ENCODE measurements at regions of chr17 and their contacts with region 1.

Region 1: DNA sequence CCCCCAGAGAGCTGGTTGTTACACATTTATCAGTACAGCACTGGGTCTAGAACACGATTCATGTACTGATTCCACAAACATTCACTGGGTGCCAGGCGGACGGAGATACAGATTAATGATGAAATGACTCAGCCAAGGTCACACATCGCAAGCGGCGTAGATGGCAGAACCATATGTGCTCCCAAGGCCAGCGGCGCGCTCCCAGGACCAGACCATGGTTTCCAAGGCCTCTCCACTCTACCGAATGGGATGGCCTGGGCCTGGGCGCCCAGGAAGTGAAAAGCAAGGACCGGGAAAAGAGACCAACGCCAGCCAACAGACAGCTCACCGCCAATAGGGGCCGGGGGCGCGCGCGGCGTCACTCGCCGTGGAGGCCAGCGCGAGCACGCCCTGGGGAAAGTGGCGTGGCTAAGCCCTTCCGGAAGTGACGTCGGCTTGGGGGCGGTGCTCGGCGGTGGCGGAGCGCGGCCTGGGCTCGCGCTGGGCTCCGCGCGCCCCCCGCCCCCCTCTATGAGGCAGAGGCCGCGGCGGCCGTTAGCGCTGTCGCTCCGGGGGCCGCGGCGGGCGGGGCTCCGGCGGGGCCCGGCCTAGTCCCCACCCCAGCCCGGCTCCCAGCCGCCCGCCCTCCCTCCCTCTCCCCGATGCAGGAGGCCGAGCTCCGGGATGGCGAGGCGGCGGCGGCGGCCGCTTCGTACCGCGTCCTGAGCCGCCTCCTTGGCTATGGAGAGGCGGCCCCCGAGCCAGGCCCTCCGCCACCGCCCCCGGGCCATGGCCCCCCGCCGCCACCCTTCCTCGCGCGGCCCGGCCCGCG is at the start of gene SOCS7:
- DNase-seq: peak; percentile 55
- H3K4me3 ChIP-seq: peak within 1 kb of the TSS; percentile 71
- H3K27ac ChIP-seq: peak within 1 kb of the TSS; percentile 89
- H3K27me3 ChIP-seq: no peaks in the 10 kb centered on the region
- CTCF ChIP-seq: no peak
- polyA plus RNA-seq, gene SOCS7: 5.8 and 6.5 TPM in 2 replicates

Region 2: DNA sequence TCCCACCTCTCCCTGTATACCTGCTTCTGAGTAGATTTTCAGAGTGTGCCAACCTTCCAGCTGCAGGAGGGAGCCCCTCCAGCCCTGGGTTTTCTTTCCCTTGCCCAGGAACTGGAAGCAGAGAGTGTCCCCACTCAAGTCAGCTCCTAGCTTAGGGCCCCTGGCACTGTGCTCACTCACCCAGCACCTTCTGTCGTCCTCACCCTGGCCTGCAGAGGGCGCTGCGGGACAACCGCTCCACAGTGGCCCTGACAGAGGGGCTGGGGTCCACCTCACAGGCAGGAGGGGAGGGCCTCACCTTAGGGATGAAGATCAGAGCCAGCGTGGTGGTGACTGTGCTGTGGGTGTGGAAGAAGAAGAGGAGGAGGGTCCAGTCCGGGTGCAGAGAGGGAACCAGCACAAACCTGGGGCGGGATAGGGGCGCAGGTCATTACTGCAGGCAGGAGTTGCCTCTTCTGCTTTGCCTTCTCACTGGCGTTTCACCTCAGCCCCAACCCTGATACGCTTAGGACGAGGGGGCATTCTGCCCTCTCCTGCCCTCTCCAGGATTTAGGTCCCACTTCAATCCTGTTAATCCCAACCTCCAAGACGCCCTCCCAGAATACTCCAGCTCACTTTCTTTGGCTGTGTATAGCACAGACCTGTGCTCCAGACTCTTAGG is 17.9 kb before region 1 on chr17:
- CTCF ChIA-PET with region 1: interaction called, 24 read pairs
- POLR2A ChIA-PET with region 1: no interaction called
- DNase-seq: no peak
- H3K4me3 ChIP-seq: no peak overlapping the region
- H3K27ac ChIP-seq: no peak overlapping the region
- H3K27me3 ChIP-seq: peaks cover 48% of the 10 kb centered on the region
- CTCF ChIP-seq: peak; percentile 60

Region 3: DNA sequence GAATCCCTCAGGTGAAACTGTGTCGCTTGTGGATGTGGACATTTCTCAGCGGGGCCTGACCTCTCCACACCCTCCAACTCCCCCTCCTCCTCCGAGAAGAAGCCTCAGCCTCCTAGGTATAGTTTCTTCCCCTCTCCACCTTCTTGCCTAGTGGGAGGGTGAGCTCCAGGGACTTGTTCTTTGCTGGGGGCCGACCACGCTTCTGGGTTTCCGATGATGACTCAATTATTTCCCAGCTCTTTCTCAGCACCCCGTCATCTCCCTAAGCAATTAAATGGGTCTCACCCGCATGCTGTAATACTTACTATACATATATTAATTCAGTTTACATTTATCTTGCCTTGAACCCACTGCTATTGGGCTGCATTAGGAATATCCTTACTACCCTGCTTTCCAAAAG is 13.1 kb after region 1 on chr17:
- CTCF ChIA-PET with region 1: interaction called, 40 read pairs
- POLR2A ChIA-PET with region 1: no interaction called
- DNase-seq: no peak
- H3K4me3 ChIP-seq: no peak overlapping the region
- H3K27ac ChIP-seq: no peak overlapping the region
- H3K27me3 ChIP-seq: no peaks in the 10 kb centered on the region
- CTCF ChIP-seq: no peak

Region 4: GRCh38 chr17:38403491-38403890 is 51.9 kb after region 1 on chr17:
- CTCF ChIA-PET with region 1: interaction called, 21 read pairs
- POLR2A ChIA-PET with region 1: no interaction called
- DNase-seq: no peak
- H3K4me3 ChIP-seq: no peak overlapping the region
- H3K27ac ChIP-seq: no peak overlapping the region
- H3K27me3 ChIP-seq: no peaks in the 10 kb centered on the region
- CTCF ChIP-seq: no peak

Region 5: GRCh38 chr17:38421171-38421841 is 69.7 kb after region 1 on chr17:
- CTCF ChIA-PET with region 1: interaction called, 179 read pairs
- POLR2A ChIA-PET with region 1: interaction called, 10 read pairs
- DNase-seq: peak; percentile 44
- H3K4me3 ChIP-seq: 0 out of 2 replicates have a peak overlapping the region, but pooled peaks have one; percentile 2
- H3K27ac ChIP-seq: peak overlapping the region; percentile 22
- H3K27me3 ChIP-seq: peaks cover 28% of the 10 kb centered on the region
- CTCF ChIP-seq: no peak

Region 6: DNA sequence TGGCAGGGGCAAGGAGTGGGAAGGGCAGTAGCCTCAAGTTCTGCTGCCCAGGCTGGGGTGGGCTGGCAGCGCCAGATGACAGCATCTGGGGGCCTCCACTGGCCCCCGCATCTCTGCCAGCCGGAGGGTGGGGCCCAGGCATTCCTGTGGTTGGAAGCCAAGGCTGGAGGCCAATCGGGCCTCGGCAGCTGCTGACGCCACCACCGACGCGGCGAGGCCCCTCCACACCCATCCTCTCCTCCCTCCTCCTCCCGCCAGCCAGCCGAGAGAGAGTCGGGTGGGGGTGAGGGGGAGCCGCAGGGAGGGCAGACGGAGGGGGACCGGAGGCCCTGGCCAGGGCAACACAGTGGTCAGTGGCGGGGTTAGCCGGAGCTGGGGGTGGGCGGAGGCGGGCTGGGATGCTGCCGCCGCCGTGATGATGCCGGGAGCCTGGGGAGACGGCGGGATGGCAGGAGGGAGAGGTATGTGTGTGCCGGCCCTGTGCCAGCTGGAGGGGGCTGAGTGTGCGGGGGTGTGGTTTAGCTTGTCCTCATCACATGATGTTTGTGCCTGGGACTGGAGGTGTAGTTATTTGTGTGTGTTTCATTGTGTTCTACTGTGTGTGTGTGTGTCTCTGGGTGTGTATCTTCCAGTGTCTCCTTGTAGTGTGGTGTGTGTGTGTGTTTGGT is 113.2 kb after region 1 on chr17:
- CTCF ChIA-PET with region 1: no interaction called
- POLR2A ChIA-PET with region 1: no interaction called
- DNase-seq: peak; percentile 83
- H3K4me3 ChIP-seq: peak overlapping the region; percentile 68
- H3K27ac ChIP-seq: peak overlapping the region; percentile 96
- H3K27me3 ChIP-seq: no peaks in the 10 kb centered on the region
- CTCF ChIP-seq: no peak

Region 7: DNA sequence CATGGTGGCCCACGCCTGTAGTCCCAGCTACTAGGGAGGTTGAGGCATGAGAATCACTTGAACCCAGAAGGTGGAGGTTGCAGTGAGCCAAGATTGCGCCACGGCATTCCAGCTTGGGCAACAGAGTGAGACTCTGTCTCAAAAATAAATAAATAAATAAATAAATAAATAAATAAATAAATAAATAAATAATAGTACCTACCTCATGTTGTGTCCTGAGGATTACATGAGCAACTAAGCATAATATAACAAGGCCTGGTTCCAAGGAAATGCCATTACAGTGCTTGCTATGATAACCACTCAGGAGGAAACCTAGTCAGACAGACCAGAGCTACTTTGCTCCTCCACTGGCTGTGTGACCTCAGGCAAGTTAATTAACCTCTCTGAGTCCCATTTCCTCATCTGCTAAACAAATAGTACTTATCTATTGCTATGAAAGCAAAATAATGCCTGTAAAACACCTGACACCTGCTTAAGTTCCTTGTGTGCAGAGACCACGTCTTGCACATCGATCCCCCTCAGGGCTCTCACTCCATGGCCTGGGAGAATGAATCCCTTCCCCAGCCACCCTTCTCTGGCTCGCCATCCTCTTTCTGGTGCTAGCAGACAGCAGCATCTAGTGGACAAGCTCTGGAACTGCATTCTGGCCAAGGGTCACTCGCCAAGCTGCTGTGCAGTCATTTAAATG is 315.6 kb after region 1 on chr17:
- CTCF ChIA-PET with region 1: interaction called, 15 read pairs
- POLR2A ChIA-PET with region 1: no interaction called
- DNase-seq: peak; percentile 42
- H3K4me3 ChIP-seq: no peak overlapping the region
- H3K27ac ChIP-seq: no peak overlapping the region
- H3K27me3 ChIP-seq: peaks cover 50% of the 10 kb centered on the region
- CTCF ChIP-seq: peak; percentile 100

Measured in AG04450 (cell line).